ENCODE measurements at regions of chr11 and their contacts with region 1.

Region 1: DNA sequence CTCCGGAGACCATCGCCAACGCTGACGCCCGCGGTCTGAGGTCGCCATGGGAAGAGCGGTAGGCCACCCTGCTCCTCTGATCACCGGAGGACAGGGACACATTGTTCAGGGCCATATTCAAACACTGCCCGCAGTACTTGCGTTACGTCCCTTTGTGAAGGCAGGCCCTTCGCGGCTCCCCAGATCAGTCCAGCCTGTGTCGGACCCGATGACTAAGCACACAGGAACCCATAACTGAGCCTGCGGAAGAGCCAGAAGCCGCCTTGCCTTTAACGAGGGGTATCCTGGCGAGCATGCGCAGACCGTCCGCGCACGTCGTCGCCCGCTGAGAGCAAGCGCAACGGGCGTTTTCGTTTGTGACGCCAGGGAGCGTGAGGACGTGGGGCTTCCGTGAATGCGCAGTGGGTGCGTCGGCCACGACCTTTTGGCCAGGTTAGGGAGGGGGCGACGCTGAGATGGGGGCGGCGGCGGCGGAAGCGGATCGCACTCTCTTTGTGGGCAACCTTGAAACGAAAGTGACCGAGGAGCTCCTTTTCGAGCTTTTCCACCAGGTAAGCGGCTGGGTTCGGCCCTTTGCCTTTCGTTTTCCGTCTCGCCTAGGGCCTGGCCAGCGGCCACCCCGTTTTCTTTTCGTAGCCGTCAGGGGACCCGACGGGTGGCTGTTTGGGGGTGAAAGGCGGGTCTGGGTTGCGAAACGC is at the starts of genes C11orf71 and RBM7:
- DNase-seq: peak; percentile 99
- total RNA-seq, gene C11orf71: 9.9 TPM
- total RNA-seq, gene RBM7: 20.3 TPM

Region 2: DNA sequence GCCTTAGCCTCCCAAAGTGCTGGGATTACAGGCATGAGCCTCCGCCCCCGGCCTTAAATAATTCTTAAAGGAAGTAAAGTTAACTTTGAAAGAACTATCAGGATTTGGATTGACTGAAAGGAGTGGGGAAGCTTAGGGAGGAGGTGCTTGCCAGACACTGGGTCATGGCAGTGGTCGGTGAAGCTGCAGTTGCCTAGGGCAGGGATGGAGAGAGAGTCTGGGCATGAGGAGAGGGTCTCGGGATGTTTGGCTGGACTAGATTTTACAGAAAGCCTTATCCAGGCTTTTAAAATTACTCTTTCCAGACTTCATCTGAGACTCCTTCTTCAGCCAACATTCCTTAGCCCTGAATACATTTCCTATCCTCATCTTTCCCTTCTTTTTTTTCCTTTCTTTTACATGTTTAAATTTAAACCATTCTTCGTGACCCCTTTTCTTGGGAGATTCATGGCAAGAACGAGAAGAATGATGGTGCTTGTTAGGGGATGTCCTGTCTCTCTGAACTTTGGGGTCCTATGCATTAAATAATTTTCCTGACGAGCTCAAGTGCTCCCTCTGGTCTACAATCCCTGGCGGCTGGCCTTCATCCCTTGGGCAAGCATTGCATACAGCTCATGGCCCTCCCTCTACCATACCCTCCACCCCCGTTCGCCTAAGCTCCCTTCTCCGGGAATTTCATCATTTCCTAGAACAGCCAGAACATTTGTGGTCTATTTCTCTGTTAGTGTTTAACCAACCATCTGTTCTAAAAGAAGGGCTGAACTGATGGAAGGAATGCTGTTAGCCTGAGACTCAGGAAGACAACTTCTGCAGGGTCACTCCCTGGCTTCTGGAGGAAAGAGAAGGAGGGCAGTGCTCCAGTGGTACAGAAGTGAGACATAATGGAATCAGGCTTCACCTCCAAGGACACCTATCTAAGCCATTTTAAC is 104.4 kb before region 1 on chr11 and contains the start of gene NNMT:
- intact Hi-C with region 1: loop called (anchors 10 kb)
- DNase-seq: no peak
- total RNA-seq, gene NNMT: 72.9 TPM

Region 3: GRCh38 chr11:114348200-114349191 is 51.9 kb before region 1 on chr11:
- intact Hi-C with region 1: loop called (anchors 5 kb)
- DNase-seq: no peak

Region 4: GRCh38 chr11:114439229-114440120 is 39.1 kb after region 1 on chr11 and contains the start of gene REXO2:
- intact Hi-C with region 1: loop called (anchors 1 kb)
- DNase-seq: peak; percentile 98
- total RNA-seq, gene REXO2: 162 TPM

Region 5: GRCh38 chr11:114525682-114526081 is 125.3 kb after region 1 on chr11:
- intact Hi-C with region 1: no loop called
- DNase-seq: no peak

Measured in cardiac septum (tissue), 1 donor.